Breast epithelium (tissue), 4 donors: ENCODE measurements at regions of chr6 and their contacts with region 1.

Region 1: DNA sequence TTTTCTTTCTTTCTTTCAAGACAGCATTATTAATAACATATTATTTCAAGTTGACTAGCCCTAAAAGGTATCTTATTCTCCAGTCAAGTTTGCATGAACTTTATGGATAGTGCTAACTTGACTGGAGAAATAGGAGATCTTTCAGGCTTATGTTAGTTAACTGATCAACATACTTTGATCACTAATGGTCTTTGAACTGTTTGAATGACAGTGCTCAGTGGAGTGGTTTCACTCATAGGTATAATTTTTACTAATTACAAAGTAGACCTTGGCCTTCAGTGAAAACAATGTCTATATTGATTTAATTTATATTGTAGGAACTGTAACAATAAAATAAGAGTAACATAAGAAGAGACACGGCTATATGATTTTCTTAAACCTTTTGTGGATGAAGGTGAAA is 8.0 kb upstream of the LRRC1 start:
- DNase-seq: no peak
- H3K4me3 ChIP-seq: no peak overlapping the region
- H3K27ac ChIP-seq: no peak overlapping the region
- H3K4me1 ChIP-seq: no peaks in the 10 kb centered on the region
- H3K27me3 ChIP-seq: no peaks in the 10 kb centered on the region
- CTCF ChIP-seq: no peak
- POLR2A ChIP-seq: no peak

Region 2: GRCh38 chr6:53888931-53889330 is 102.1 kb after region 1 on chr6:
- intact Hi-C with region 1: loop called (anchors 10 kb)
- DNase-seq: no peak
- H3K4me3 ChIP-seq: no peak overlapping the region
- H3K27ac ChIP-seq: no peak overlapping the region
- H3K4me1 ChIP-seq: no peaks in the 10 kb centered on the region
- H3K27me3 ChIP-seq: no peaks in the 10 kb centered on the region
- CTCF ChIP-seq: no peak
- POLR2A ChIP-seq: no peak